Heart right ventricle (tissue), 16 donors: ENCODE measurements at regions of chr1 and their contacts with region 1.

Region 1: GRCh38 chr1:207321079-207321789 is at the start of gene CD55:
- DNase-seq: peak; percentile 93 to 97
- ATAC-seq: peak; percentile 96 to 99 (median 97)
- H3K4me3 ChIP-seq: peak within 1 kb of the TSS; percentile 66 to 98 (median 88)
- H3K27ac ChIP-seq: peak within 1 kb of the TSS; percentile 94 to 99 (median 96)
- H3K4me1 ChIP-seq: peaks cover 0 to 68% (median 28%) of the 10 kb centered on the region in 9 donors
- H3K27me3 ChIP-seq: no peaks in the 10 kb centered on the region
- CTCF ChIP-seq: peak in 5 of 9 donors; percentile 22 to 46 (median 44)
- total RNA-seq, gene CD55: 69.5 to 132 (median 81.4) TPM

Region 2: DNA sequence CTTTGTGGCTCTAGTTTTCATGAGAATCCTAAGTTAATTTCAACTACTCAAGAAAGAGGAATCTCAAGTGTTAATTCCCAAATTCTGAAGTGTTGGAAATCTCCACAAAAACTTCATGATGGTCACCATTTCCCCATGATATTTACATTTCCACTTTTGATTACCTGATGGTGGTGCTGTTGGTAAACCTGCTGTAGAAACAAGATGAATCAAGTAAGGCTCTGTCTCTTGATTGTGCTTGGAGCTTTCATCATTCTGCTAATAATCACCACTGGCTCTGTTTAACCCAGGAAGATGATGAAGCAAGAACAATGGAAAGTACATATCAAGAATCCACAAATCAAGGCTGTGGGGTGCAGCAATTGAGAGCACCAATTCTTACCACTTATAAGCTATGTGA is 139.4 kb before region 1 on chr1:
- intact Hi-C with region 1: loop called in 1 of 10 experiments (anchors 10 kb)
- DNase-seq: no peak
- ATAC-seq: no peak
- H3K4me3 ChIP-seq: no peak overlapping the region
- H3K27ac ChIP-seq: no peak overlapping the region
- H3K4me1 ChIP-seq: no peaks in the 10 kb centered on the region
- H3K27me3 ChIP-seq: no peaks in the 10 kb centered on the region
- CTCF ChIP-seq: peak in 6 of 9 donors; percentile 21 to 46 (median 28)

Region 3: DNA sequence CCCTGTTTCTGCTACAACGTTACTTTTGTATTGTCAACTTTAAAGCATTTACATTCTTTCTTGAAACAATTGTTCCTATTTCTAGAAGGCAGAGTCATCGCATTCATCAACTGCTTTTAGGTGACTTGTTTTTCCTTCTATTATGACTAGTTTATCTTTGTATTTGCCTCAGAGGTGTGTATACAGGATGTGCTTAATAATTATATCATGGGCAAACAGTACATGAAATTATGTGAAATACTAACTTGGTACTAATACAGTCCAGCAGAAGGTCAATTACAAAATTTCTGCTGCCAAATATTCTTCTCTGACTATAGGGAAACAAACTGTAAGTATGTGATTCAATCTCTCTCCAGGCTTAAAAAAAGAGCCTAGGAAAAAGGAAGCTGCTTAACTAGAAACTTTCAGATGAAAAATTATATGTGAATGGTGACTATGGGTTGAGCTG is 115.6 kb before region 1 on chr1:
- intact Hi-C with region 1: loop called in 1 of 10 experiments (anchors 2 kb)
- DNase-seq: no peak
- ATAC-seq: peak in 7 of 8 donors; percentile 9 to 66 (median 46)
- H3K4me3 ChIP-seq: no peak overlapping the region
- H3K27ac ChIP-seq: peak overlapping the region in 8 of 10 donors; percentile 56 to 85 (median 72)
- H3K4me1 ChIP-seq: peaks cover 0 to 35% (median 3%) of the 10 kb centered on the region in 9 donors
- H3K27me3 ChIP-seq: no peaks in the 10 kb centered on the region
- CTCF ChIP-seq: no peak

Region 4: GRCh38 chr1:207342346-207342745 is 21.1 kb after region 1 on chr1:
- intact Hi-C with region 1: loop called in 1 of 10 experiments (anchors 2 kb)
- DNase-seq: no peak
- ATAC-seq: no peak
- H3K4me3 ChIP-seq: no peak overlapping the region
- H3K27ac ChIP-seq: no peak overlapping the region
- H3K4me1 ChIP-seq: peaks cover 0 to 31% (median 9%) of the 10 kb centered on the region in 9 donors
- H3K27me3 ChIP-seq: no peaks in the 10 kb centered on the region
- CTCF ChIP-seq: no peak